MCF 10A (cell line): ENCODE measurements at regions of chr11 and their contacts with region 1.

Region 1: DNA sequence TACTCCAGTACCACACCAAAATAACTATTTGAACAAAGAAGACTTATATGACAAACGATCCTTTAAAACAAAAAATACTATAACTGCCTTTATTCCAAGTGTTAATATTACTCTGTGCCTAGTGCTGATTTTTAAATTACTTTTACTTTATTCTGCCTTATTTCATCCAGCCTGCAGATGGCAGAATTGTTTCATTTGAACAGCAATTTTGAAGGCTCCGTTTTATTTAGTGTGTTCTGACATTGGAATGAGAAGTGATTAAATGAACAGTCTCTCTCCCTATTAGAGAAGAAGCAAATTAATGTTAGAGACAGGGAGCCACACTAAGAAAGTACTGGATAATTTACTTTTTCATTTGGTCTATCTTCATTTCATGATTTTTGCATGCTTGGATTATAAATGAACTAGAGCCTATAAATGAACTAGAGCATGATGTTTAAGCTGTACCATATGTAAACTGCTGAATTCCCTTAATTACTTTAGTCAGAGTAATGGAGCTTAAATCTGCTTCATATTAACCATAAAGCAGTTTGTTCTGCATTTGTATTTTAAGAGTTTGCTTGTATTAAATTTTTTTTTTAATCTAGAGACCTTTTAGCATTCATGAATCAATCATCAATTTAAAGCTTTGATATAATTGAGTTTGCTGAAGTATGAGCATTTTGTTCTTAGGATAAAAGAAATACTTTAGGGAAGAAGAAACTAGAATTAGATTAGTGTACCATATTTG is 9.8 kb downstream of the PDHX start:
- DNase-seq: peak; percentile 59
- H3K4me3 Mint-ChIP-seq: no peak overlapping the region
- H3K27ac Mint-ChIP-seq: no peak overlapping the region
- H3K4me1 Mint-ChIP-seq: peaks cover 34% of the 10 kb centered on the region
- H3K27me3 Mint-ChIP-seq: no peaks in the 10 kb centered on the region
- CTCF ChIP-seq: peak; percentile 68

Region 2: DNA sequence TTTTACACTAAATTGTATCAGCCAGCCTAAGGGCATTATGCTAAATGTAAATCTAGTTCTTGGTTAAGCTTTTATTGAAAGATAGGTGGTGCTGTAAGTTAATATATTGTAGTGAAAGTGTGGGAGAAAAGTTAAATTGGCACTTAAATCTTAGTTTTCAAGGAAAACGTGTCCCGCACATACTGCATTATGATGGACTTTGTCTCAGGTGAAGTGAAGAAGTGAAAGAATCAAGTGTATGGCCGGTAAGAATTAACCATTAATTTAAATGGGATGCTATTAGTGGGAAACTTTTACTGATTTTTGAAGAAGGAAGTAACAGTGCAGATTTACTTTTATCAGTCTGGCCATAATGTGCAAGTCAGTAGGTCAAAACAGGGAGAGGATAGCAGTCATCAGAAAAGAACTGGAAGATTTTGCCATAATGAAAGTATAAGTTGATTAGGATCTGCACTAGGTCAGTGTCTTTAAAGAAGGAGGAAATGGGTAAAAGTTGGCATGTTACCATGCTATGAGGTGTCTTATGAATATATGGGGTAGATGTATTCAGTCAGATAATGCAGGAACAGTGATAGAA is 71.8 kb after region 1 on chr11:
- CTCF ChIA-PET with region 1: interaction called, 5 read pairs
- POLR2A ChIA-PET with region 1: interaction called, 3 read pairs
- intact Hi-C with region 1: loop called (anchors 5 kb)
- DNase-seq: peak; percentile 21
- H3K4me3 Mint-ChIP-seq: no peak overlapping the region
- H3K27ac Mint-ChIP-seq: peak overlapping the region; percentile 6
- H3K4me1 Mint-ChIP-seq: peaks cover 6% of the 10 kb centered on the region
- H3K27me3 Mint-ChIP-seq: no peaks in the 10 kb centered on the region
- CTCF ChIP-seq: peak; percentile 44

Region 3: GRCh38 chr11:35237860-35238715 is 311.8 kb after region 1 on chr11:
- CTCF ChIA-PET with region 1: interaction called, 7 read pairs
- POLR2A ChIA-PET with region 1: no interaction called
- intact Hi-C with region 1: loop called (anchors 2 kb)
- DNase-seq: peak; percentile 83
- H3K4me3 Mint-ChIP-seq: no peak overlapping the region
- H3K27ac Mint-ChIP-seq: no peak overlapping the region
- H3K4me1 Mint-ChIP-seq: peaks cover 22% of the 10 kb centered on the region
- H3K27me3 Mint-ChIP-seq: no peaks in the 10 kb centered on the region
- CTCF ChIP-seq: peak; percentile 54

Region 4: DNA sequence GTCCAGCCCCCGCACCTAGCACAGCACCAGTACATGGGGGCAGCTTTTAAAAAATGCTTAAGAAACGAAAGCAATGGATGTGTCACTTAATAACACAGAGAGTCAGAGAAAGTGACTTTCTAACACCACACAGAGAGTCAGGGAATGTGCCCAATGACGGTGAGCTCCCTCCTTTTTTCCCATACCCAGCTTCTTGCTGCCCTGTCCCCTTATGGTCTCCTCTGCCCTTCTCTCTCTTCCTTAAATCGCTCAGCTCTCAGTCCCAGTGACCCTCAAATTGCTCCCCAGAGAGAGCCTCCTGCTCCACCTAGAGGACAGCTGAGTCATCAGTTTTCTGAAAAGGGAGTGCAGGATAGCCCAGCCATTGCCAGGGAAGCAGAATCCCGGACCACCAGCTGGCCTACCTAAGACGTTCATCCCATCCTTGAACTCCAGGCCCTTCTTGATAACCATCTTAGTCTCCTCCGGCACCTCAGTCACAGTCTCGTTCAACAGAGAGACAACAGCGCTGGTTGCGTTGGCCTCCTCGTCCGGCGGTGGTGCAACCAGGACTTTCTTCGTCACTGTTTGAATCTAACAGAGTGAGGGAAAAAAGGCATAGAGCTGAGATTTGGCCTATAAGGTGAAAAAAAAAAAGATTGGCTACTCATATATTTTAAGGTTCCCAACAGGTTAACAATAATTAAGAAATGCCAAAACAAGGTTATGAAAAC is 379.6 kb after region 1 on chr11:
- CTCF ChIA-PET with region 1: no interaction called
- POLR2A ChIA-PET with region 1: no interaction called
- intact Hi-C with region 1: loop called (anchors 5 kb)
- DNase-seq: peak; percentile 61
- H3K4me3 Mint-ChIP-seq: no peak overlapping the region
- H3K27ac Mint-ChIP-seq: no peak overlapping the region
- H3K4me1 Mint-ChIP-seq: peaks cover 38% of the 10 kb centered on the region
- H3K27me3 Mint-ChIP-seq: no peaks in the 10 kb centered on the region
- CTCF ChIP-seq: peak; percentile 18

Region 5: GRCh38 chr11:35362521-35362990 is 436.3 kb after region 1 on chr11:
- CTCF ChIA-PET with region 1: no interaction called
- POLR2A ChIA-PET with region 1: no interaction called
- intact Hi-C with region 1: no loop called
- DNase-seq: no peak
- H3K4me3 Mint-ChIP-seq: no peak overlapping the region
- H3K27ac Mint-ChIP-seq: no peak overlapping the region
- H3K4me1 Mint-ChIP-seq: peaks cover 41% of the 10 kb centered on the region
- H3K27me3 Mint-ChIP-seq: no peaks in the 10 kb centered on the region
- CTCF ChIP-seq: no peak